GM18951 (cell line): ENCODE measurements at regions of chr9 and their contacts with region 1.

Region 1: DNA sequence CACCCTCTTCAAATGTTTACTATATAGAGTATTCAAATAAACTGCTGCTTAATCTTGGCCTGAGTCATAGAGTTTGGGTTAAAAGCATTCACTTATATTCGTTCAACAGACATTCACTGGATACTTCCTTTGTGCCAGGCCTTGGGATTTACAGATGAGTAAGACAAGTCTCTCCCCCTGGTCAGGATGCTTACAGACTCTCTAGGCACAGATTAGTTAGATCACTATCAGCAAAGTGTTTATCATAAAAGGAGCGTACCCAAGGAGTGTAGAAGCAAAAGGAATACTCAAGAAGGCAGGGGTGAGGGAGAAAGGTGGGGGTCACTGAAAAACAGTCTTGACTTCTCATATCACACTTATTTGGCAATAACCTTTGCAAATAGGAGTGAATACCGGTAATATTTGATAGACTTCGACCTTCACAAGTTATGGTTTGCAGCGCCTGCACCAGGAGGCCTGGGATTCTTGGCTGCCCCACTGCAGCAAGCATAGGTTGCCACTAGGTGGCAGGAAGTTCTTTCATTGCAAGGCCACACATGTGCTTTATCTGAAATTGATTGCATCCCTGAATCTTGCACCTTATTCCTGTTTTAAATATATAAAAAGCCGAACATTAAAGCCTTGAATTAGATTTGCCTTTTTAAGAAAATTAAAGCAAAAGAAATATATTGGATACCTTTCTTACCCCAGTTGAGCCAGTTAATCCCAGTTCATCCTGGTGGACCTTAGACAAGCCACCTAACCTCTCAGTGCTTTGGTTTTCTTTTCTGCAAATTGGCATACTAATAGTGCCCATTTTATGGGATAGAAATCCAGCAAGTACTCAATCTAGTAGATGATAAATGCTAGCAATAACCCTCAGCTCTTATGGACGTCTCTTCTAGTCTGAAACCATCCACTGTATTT is 6.5 kb upstream of the TRMT10B start:
- POLR2A ChIP-seq: no peak

Region 2: DNA sequence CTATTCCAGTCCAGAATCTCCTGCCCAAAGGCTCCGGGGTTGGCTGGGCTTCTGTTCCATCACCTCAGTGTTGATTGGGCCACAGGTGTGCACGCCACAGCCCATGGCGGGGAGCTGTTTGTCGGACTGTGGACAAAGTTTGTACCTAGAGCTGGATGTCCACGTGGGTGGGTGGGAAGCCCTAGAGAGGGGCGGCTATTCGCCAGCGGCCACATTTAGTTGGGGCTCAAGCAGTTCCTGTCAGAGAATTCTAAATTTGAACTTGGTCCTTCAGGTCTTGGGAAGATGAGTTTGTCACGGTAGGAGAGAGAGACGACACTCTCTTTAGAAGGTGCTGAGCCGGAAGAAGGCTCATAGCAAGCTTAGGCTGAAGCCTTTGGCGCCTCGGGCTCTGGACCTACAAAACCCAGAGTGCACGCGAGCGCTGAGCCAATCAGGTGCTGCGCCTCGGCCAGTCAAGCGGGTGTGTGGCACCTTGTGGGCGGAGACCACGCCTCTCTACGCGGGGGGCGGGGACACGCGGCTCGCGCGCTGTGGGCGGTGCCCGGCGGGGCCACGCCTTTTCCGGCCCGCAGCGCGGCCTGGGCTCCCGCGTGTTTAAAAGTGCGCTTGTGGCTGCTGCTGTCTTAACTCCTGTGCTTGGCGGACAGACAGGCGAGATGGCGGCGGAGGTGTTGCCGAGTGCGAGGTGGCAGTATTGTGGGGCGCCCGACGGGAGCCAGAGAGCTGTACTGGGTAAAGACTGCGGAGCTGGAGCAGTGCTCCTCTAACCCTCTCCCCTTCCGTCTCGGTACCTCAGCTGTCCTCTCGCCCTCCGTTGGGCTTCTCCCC is 261.5 kb before region 1 on chr9 and contains the start of gene POLR1E:
- in situ Hi-C with region 1: loop called (anchors 25 kb)
- POLR2A ChIP-seq: peak; percentile 96

Region 3: GRCh38 chr9:37550781-37551180 is 196.3 kb before region 1 on chr9:
- in situ Hi-C with region 1: no loop called
- POLR2A ChIP-seq: no peak

Region 4: GRCh38 chr9:38088006-38088925 is 341.2 kb after region 1 on chr9:
- in situ Hi-C with region 1: no loop called
- POLR2A ChIP-seq: no peak